Activated naive CD4-positive, alpha-beta T cell treated with anti-CD3 and anti-CD28 coated beads for 36 hours (primary cell): ENCODE measurements at regions of chr12 and their contacts with region 1.

Region 1: DNA sequence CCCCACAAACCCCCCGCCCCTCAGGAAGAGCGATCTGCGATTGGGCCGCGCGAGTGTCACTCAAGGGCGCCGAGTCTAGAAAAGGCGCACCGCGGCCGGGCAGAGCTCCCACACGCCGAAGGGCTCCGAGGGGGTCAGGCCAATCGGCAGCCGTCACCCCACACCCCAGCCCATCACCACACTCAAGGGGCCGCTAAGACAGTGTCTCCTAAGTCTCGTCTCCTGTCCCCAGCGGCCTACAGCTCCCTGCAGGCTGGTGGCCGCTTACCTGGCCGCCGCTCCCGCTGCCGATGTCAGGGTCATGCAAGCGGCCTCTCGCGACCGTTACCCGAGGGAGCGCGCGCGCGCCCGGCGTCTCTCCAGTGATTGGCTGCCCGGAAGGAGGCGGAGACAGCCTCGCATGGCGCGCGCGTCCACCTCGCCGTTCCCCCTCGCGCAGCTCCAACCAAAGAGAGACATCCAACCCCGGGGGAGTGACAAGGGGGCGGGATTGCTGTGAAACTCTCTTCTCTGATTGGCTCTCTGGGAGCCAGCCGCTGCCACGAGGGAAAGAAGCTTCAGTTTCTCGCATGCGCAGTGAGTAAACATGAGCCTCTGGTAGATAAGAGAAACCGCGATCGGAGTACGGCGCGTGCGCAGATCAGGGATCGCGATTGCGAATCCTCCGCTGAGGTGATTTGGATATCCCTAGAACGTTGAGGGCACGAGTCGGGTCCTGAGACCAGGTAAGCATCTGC is at the starts of genes MPHOSPH9 and MTRFR:
- DNase-seq: peak; percentile 100
- H3K4me3 Mint-ChIP-seq: peak within 1 kb of the TSS; percentile 96
- H3K27ac Mint-ChIP-seq: peak within 1 kb of the TSS; percentile 99
- H3K4me1 Mint-ChIP-seq: peaks cover 58% of the 10 kb centered on the region
- H3K27me3 Mint-ChIP-seq: no peaks in the 10 kb centered on the region
- total RNA-seq, gene MPHOSPH9: 111 to 114 TPM
- total RNA-seq, gene MTRFR: 27.7 to 27.8 TPM

Region 2: DNA sequence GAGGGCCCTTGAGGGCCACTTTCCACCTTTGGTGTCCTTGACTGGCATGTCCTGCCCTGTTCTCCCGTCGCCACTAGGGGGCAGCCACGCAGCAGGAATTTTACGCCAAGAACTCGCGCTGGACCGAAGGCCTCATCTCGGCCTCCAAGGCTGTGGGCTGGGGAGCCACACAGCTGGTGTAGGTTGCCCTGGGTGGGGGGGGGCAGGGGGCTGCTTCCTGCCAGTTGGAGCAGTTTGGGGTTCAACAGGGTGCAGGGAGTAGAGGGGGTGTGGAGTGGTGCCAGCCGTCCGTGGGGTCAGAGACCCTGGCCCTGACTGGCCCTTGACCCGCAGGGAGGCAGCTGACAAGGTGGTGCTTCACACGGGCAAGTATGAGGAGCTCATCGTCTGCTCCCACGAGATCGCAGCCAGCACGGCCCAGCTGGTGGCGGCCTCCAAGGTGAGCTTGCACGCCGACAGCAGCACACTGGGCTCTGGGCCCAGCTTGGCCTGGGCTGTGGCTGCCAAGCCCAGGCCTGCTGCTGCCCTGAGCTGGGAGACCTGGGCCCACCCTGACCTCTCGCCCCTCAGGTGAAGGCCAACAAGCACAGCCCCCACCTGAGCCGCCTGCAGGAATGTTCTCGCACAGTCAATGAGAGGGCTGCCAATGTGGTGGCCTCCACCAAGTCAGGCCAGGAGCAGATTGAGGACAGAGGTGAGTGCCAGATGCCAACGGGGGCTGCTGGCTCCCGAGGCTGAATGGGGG is 372.5 kb before region 1 on chr12:
- CTCF ChIA-PET with region 1: interaction called, 6 read pairs
- intact Hi-C with region 1: loop called (anchors 1 kb)
- DNase-seq: peak; percentile 91
- H3K4me3 Mint-ChIP-seq: no peak overlapping the region
- H3K27ac Mint-ChIP-seq: no peak overlapping the region
- H3K4me1 Mint-ChIP-seq: no peaks in the 10 kb centered on the region
- H3K27me3 Mint-ChIP-seq: no peaks in the 10 kb centered on the region

Region 3: DNA sequence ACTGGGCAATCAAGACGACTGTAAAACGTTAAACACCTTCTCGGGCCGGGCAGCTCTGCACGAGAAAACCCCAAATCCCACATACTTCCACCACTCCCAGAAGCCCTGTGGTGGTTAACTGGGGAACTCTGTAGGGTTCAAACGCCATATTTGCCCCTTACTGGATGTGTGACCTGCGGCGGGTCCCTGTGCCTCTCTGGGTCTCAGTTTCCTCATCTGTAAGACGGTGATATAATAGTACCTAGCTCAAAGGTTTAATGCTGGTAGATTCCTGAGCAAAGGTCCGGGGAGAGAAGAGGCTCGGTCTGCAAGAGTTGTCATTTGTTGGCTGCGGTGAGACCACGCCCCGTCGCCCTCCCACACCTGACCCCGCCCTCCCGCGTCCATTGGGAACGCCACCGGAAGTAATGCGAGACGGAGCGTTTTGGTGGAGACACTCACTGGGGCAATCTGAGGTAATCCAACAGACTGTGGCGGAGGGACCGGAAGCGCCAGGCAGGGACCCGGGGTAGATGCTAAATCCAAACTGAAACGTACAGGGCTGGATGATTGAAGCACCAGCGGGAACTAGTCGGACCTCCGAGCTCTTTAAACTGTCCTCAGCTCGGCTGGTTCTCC is 258.6 kb before region 1 on chr12:
- CTCF ChIA-PET with region 1: interaction called, 3 read pairs
- intact Hi-C with region 1: loop called (anchors 1 kb)
- DNase-seq: peak; percentile 100
- H3K4me3 Mint-ChIP-seq: peak overlapping the region; percentile 90
- H3K27ac Mint-ChIP-seq: peak overlapping the region; percentile 100
- H3K4me1 Mint-ChIP-seq: peaks cover 33% of the 10 kb centered on the region
- H3K27me3 Mint-ChIP-seq: no peaks in the 10 kb centered on the region

Region 4: DNA sequence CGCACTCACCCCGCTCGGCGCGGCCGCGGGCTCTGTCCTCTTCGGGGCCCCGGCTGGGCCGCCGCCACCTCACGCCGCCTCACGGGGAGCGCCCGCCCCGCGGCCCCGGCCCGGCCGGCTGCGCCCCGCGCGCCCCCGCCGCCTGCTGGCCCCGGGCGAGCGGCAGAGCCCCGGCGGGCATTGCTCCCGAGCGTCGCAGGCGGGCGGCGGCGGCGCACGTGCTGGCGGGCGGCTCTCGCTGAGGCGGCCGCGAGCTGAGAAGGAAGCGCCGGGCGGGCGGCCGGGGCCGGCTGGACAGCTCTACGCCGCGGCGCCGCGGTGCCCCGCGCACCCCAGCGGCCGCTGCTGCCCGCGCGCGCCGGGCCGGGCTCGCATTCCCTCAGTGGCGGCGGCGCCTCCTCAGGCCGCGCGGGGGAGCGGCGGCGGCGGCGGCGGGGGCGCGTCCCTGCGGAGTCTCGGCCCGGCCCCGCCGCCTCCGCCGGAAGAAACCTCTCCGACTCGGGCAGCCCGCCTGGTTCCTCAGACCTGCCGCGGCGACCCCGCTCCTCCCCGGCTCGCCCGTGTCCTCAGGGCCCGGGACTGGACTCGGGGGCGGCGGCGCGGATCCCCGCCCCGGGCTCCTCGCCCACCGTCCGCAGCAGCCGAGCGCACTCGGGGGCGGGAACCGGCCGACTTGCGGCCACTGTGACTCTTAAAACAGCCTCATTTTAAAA is 82.1 kb before region 1 on chr12 and contains the start of gene PITPNM2:
- CTCF ChIA-PET with region 1: interaction called, 7 read pairs
- intact Hi-C with region 1: loop called (anchors 2 kb)
- DNase-seq: peak; percentile 63
- H3K4me3 Mint-ChIP-seq: peak within 1 kb of the TSS; percentile 77
- H3K27ac Mint-ChIP-seq: peak within 1 kb of the TSS; percentile 75
- H3K4me1 Mint-ChIP-seq: peaks cover 29% of the 10 kb centered on the region
- H3K27me3 Mint-ChIP-seq: no peaks in the 10 kb centered on the region
- total RNA-seq, gene PITPNM2: 15.4 TPM

Region 5: GRCh38 chr12:123271001-123271729 is 38.2 kb after region 1 on chr12:
- CTCF ChIA-PET with region 1: interaction called, 10 read pairs
- intact Hi-C with region 1: no loop called
- DNase-seq: peak; percentile 81
- H3K4me3 Mint-ChIP-seq: no peak overlapping the region
- H3K27ac Mint-ChIP-seq: no peak overlapping the region
- H3K4me1 Mint-ChIP-seq: peaks cover 23% of the 10 kb centered on the region
- H3K27me3 Mint-ChIP-seq: no peaks in the 10 kb centered on the region